Gastrocnemius medialis (tissue), 4 donors: ENCODE measurements at regions of chr9 and their contacts with region 1.

Region 1: DNA sequence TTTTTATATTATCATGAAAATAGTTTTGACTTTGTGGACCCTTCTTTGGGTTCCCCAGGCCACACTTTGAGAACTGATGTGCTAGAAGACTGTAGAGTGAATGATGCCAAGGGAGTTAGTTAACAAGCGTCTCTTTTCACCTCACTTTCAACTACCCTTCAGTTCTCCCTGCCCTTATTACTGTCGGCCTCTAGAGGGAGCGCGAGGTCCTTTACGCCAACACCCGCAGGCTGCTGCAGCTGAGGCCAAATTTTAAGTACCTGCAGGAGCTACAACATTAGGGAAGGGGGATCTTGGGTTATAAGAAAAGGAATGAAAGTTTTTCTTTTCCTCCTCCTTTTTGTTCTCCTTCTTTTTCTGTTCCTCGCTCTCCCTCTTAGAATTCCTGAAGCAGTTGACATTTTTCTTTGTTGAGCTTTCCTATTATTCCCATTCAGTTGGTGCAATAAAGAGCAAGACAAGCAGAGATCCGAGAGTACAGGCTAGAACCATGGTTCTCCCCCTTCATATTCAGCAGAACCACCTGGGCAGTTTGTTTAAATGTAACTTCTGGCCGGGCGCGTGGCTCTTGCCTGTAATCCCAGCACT is 84.0 kb downstream of the ZFAND5 start:
- DNase-seq: peak; percentile 36 to 67
- ATAC-seq: peak; percentile 89 to 96
- H3K4me3 ChIP-seq: no peak overlapping the region
- H3K27ac ChIP-seq: no peak overlapping the region
- H3K4me1 ChIP-seq: no peaks in the 10 kb centered on the region
- H3K27me3 ChIP-seq: no peaks in the 10 kb centered on the region
- CTCF ChIP-seq: peak; percentile 81 to 93 (median 86)
- POLR2A ChIP-seq: no peak

Region 2: GRCh38 chr9:71604197-71605063 is 676.6 kb before region 1 on chr9:
- in situ Hi-C with region 1: no loop called
- intact Hi-C with region 1: no loop called
- DNase-seq: peak; percentile 4 to 32
- ATAC-seq: no peak
- H3K4me3 ChIP-seq: no peak overlapping the region
- H3K27ac ChIP-seq: no peak overlapping the region
- H3K4me1 ChIP-seq: peaks cover 8% of the 10 kb centered on the region in 2 donors
- H3K27me3 ChIP-seq: no peaks in the 10 kb centered on the region
- CTCF ChIP-seq: peak; percentile 25 to 61 (median 51)
- POLR2A ChIP-seq: no peak

Region 3: GRCh38 chr9:72497447-72498046 is 216.5 kb after region 1 on chr9:
- in situ Hi-C with region 1: no loop called
- intact Hi-C with region 1: no loop called
- DNase-seq: no peak
- ATAC-seq: no peak
- H3K4me3 ChIP-seq: no peak overlapping the region
- H3K27ac ChIP-seq: no peak overlapping the region
- H3K4me1 ChIP-seq: no peaks in the 10 kb centered on the region
- H3K27me3 ChIP-seq: no peaks in the 10 kb centered on the region
- CTCF ChIP-seq: no peak
- POLR2A ChIP-seq: no peak

Region 4: GRCh38 chr9:72753266-72753893 is 472.4 kb after region 1 on chr9:
- in situ Hi-C with region 1: no loop called
- intact Hi-C with region 1: loop called (anchors 2 kb)
- DNase-seq: no peak
- ATAC-seq: no peak
- H3K4me3 ChIP-seq: no peak overlapping the region
- H3K27ac ChIP-seq: no peak overlapping the region
- H3K4me1 ChIP-seq: no peaks in the 10 kb centered on the region
- H3K27me3 ChIP-seq: peaks cover 0 to 3% (median 0%) of the 10 kb centered on the region in 3 donors
- CTCF ChIP-seq: no peak
- POLR2A ChIP-seq: no peak

Region 5: DNA sequence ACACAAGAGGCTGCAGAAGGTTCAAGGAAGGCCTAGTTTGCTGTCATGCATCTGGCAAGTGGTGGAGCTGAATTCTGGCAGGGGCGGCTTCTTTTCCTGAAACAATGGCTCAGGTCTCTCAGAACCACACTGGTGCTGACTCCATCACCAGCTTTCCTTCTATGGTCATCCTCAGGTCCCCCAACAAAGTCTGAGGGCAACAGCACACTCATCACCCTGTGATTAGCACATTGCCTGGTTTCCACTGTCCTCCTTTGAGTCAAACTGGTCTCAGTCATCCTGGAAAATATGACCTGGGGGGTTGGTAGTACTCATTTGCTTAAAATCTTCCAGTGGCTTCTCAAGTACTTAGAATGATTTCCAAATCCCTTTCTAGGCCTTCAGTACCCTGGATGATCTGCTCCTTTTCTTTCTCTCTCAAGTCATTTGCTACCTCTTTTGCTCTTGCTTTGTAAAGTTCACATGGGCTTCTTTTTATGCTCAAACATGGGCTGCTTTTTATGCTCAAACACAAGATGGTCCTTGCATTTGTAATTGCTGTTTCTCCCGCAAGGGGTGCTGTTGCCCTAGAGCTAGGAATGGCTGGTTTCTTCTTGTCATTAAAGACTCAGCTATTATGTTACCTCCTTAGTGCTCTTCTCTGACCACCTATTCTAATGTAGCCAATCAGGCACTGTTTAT is 526.9 kb after region 1 on chr9:
- in situ Hi-C with region 1: loop called in 1 of 4 experiments (anchors 5 kb)
- intact Hi-C with region 1: no loop called
- DNase-seq: no peak
- ATAC-seq: no peak
- H3K4me3 ChIP-seq: no peak overlapping the region
- H3K27ac ChIP-seq: no peak overlapping the region
- H3K4me1 ChIP-seq: no peaks in the 10 kb centered on the region
- H3K27me3 ChIP-seq: no peaks in the 10 kb centered on the region
- CTCF ChIP-seq: no peak
- POLR2A ChIP-seq: no peak

Region 6: GRCh38 chr9:72827950-72828731 is 547.1 kb after region 1 on chr9:
- in situ Hi-C with region 1: loop called in 3 of 4 experiments (anchors 5 to 10 kb)
- intact Hi-C with region 1: loop called (anchors 2 kb)
- DNase-seq: no peak
- ATAC-seq: no peak
- H3K4me3 ChIP-seq: no peak overlapping the region
- H3K27ac ChIP-seq: peak overlapping the region in 3 of 4 donors; percentile 14 to 27 (median 27)
- H3K4me1 ChIP-seq: peaks cover 0 to 3% of the 10 kb centered on the region in 2 donors
- H3K27me3 ChIP-seq: no peaks in the 10 kb centered on the region
- CTCF ChIP-seq: no peak
- POLR2A ChIP-seq: no peak